Dendritic cell treated with granulocyte-macrophage colony-stimulating factor and Interleukin-4, amounts not matched to agents 40 ng/mL and 50 ng/mL, for 4 days (primary cell): ENCODE measurements at regions of chr5 and their contacts with region 1.

Region 1: DNA sequence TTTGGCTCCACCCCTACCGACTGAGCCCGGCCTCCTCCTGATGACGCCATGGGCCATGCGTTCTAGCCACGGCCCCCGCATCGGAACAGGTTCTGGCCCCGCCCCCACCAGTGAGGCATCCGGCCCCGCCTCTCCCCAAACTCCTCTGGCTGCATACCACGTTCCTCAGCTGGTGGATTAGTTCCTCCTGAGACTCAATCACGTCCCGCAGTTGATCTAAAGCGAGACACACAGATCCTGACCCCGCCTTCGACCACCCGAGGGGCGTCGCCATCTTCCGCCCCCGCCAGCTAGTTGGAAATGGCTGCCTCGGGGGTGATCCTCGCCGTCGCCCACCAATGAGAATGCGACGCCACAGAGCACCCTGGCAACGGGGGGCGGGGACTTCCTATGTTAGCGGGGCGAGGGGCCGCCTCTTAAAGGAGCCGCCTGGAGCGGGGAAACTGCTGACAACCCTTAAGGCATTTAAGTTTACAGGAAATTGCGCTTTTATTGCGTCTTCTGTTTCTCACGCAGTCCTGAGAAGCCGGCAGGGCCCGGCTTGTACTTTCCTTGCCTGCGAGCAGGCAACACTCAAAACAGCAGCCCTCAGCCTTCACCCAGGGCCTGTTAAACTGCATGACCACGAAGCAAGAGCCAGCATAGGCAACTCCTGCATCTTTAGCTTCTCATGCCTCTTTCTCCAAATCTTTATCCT is at the start of gene SPATA24:
- H3K4me3 Mint-ChIP-seq: peak within 1 kb of the TSS; percentile 82
- H3K27ac Mint-ChIP-seq: peak within 1 kb of the TSS; percentile 95
- H3K4me1 Mint-ChIP-seq: peaks cover 29% of the 10 kb centered on the region
- H3K27me3 Mint-ChIP-seq: no peaks in the 10 kb centered on the region

Region 2: DNA sequence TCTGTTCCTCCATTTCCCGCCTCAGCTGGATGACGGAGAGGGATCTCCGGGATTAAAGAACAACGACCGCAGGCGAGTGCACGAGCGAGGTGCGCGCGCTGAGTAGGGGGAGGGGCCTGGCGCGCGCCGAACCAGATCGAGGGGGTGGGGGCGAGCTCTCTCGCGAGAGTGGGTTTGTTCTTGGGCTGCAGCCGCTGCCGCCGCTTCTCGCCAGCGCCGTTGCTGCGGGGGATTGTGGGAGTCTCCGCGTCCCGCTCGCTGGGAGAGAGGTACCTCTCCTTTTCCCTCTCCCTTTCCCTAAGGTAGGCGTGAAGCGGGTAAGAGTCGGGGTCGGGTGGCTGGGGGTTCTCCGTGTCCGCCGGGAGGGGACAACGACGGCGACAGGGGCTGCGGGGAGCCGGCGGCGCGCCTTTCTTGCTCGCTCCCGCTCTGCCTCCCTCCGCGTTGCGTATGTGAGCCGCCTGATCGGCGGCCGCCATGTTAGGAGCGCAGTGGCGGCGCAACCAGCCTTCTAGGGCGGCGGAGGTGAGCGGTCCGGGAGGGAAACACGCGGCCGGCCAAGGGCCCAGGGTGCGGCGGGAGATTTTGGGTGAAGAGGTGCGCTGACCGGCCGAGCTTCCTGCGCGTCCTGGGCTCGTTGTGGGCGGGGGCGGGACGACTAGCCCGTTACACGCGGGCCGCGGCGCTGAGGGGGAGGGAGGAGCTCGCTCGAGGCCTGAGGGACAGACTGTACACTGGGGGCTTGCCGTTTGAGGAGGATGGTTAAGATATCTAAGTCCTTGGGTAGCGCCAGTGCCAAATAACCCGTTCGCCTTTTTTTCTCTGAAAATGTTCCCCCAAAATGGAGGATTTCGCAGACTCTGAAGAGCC is 110.2 kb before region 1 on chr5 and contains the start of gene MATR3:
- intact Hi-C with region 1: loop called (anchors 10 kb)
- H3K4me3 Mint-ChIP-seq: peak within 1 kb of the TSS; percentile 93
- H3K27ac Mint-ChIP-seq: peak within 1 kb of the TSS; percentile 97
- H3K4me1 Mint-ChIP-seq: peaks cover 39% of the 10 kb centered on the region
- H3K27me3 Mint-ChIP-seq: no peaks in the 10 kb centered on the region

Region 3: DNA sequence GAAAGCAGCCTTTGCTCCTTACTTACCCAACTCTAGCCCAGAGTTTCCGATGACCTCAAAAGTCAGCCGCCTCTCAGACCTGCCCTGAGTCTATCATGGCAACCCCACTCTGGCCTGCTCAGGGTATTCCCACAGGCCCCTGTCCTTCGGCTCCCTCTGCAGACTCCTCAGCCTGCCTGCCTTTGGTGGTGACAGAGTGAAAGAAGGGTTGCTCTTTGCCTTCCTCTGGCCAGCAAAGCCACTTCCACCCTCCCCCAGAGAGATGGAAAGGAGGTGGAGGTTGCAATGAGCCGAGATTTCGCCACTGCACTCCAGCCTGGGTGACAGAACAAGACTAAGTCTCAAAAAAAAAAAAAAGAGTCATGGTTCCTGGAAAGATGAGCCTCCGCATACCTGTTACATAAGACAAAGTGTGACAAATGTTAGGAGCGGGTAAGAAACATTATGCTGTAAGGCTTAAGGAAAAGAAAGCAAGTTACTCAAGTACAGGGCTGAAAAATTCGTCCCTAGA is 64.5 kb after region 1 on chr5:
- intact Hi-C with region 1: no loop called
- H3K4me3 Mint-ChIP-seq: no peak overlapping the region
- H3K27ac Mint-ChIP-seq: peak overlapping the region; percentile 37
- H3K4me1 Mint-ChIP-seq: peaks cover 55% of the 10 kb centered on the region
- H3K27me3 Mint-ChIP-seq: peaks cover 5% of the 10 kb centered on the region

Region 4: GRCh38 chr5:139844472-139845145 is 440.7 kb after region 1 on chr5:
- intact Hi-C with region 1: no loop called
- H3K4me3 Mint-ChIP-seq: no peak overlapping the region
- H3K27ac Mint-ChIP-seq: no peak overlapping the region
- H3K4me1 Mint-ChIP-seq: peaks cover 5% of the 10 kb centered on the region
- H3K27me3 Mint-ChIP-seq: peaks cover 53% of the 10 kb centered on the region